ENCODE measurements at regions of chr18 and their contacts with region 1.

Region 1: GRCh38 chr18:389658-390357 is 110.7 kb downstream of the COLEC12 start:
- DNase-seq: no peak
- H3K4me3 ChIP-seq: no peak overlapping the region
- H3K4me3 Mint-ChIP-seq: no peak overlapping the region
- H3K27ac ChIP-seq: no peak overlapping the region
- H3K27ac Mint-ChIP-seq: no peak overlapping the region
- H3K4me1 ChIP-seq: peaks cover 31 to 48% of the 10 kb centered on the region in 2 donors
- H3K4me1 Mint-ChIP-seq: peaks cover 49% of the 10 kb centered on the region
- H3K27me3 ChIP-seq: no peaks in the 10 kb centered on the region
- H3K27me3 Mint-ChIP-seq: peaks cover 0 to 2% (median 0%) of the 10 kb centered on the region in 3 donors
- CTCF ChIP-seq: no peak

Region 2: GRCh38 chr18:457140-457519 is 67.3 kb after region 1 on chr18:
- intact Hi-C with region 1: loop called in 1 of 2 experiments (anchors 10 kb)
- DNase-seq: no peak
- H3K4me3 ChIP-seq: peak overlapping the region in 1 of 3 experiments; percentile 41
- H3K4me3 Mint-ChIP-seq: peak overlapping the region in 1 of 2 donors; percentile 76
- H3K27ac ChIP-seq: no peak overlapping the region
- H3K27ac Mint-ChIP-seq: peak overlapping the region in 2 of 7 donors; percentile 50 to 74
- H3K4me1 ChIP-seq: peaks cover 48 to 49% of the 10 kb centered on the region in 2 donors
- H3K4me1 Mint-ChIP-seq: peaks cover 49% of the 10 kb centered on the region
- H3K27me3 ChIP-seq: no peaks in the 10 kb centered on the region
- H3K27me3 Mint-ChIP-seq: peaks cover 0 to 2% (median 0%) of the 10 kb centered on the region in 3 donors
- CTCF ChIP-seq: no peak